ENCODE measurements at regions of chr3 and their contacts with region 1.

Region 1: GRCh38 chr3:170614214-170614966 is 28.5 kb upstream of the SLC7A14 start:
- DNase-seq: no peak
- H3K4me3 Mint-ChIP-seq: no peak overlapping the region
- H3K27ac Mint-ChIP-seq: no peak overlapping the region
- H3K4me1 Mint-ChIP-seq: peaks cover 2% of the 10 kb centered on the region
- H3K27me3 Mint-ChIP-seq: peaks cover 17% of the 10 kb centered on the region

Region 2: DNA sequence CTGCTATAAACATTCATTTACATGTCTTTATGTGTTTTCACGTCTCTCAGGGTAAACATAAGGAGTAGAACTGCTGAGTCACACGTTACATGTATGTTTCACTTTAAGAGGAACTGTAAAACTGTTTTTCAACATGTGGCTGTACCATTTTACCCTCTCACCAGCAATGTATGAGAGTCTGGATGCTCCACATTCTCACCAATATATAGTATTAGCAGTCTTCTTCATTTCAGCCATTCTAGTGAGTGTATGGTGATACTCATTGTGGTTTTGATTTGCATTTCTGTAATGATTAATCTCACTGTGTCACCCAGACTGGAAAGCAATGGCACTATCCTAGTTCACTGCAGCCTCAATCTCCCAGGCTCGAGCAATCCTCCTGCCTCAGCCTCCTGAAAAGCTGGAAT is 469.9 kb before region 1 on chr3:
- intact Hi-C with region 1: no loop called
- DNase-seq: no peak
- H3K4me3 Mint-ChIP-seq: no peak overlapping the region
- H3K27ac Mint-ChIP-seq: no peak overlapping the region
- H3K4me1 Mint-ChIP-seq: peaks cover 9% of the 10 kb centered on the region
- H3K27me3 Mint-ChIP-seq: no peaks in the 10 kb centered on the region

Region 3: GRCh38 chr3:170440346-170440745 is 174.0 kb before region 1 on chr3:
- intact Hi-C with region 1: no loop called
- DNase-seq: no peak
- H3K4me3 Mint-ChIP-seq: no peak overlapping the region
- H3K27ac Mint-ChIP-seq: no peak overlapping the region
- H3K4me1 Mint-ChIP-seq: peaks cover 14% of the 10 kb centered on the region
- H3K27me3 Mint-ChIP-seq: peaks cover 4% of the 10 kb centered on the region

Region 4: DNA sequence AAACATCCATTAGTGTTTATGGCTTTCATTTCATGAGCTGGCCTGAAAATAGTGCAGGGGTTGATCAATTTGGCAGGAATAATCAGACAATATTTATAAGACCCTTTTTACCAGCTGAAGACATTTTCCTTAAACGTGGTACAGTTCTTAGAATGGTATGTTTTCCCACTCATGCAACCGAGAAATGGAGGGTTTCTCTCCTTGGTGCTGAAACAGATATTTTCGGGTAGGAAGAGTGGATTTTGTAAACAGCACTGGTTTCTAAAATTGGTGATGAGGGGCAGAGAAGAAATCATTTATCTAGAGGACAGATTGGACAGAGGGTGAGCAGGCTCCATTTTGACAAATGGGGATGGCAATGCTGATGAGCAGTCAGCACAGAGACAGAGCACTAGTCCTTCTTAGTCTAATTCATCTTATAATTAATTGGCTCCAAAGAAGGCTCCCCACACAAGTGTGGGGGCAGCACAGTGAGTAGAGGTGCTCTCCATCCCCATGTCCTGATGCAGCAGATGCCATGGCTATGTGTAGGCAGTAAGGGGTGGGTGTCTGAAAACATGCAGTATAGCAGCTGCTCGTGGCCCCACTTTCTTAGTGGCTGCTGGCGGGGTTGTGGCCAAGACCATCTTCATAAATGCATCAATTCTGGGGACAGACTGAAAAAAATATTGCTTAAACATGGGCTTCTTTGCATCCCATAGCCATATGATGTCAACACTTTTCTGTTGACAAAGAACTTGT is 10.4 kb before region 1 on chr3:
- intact Hi-C with region 1: loop called (anchors 1 kb)
- DNase-seq: no peak
- H3K4me3 Mint-ChIP-seq: no peak overlapping the region
- H3K27ac Mint-ChIP-seq: no peak overlapping the region
- H3K4me1 Mint-ChIP-seq: no peaks in the 10 kb centered on the region
- H3K27me3 Mint-ChIP-seq: peaks cover 22% of the 10 kb centered on the region

Region 5: GRCh38 chr3:170765419-170766078 is 151.2 kb after region 1 on chr3:
- intact Hi-C with region 1: no loop called
- DNase-seq: no peak
- H3K4me3 Mint-ChIP-seq: no peak overlapping the region
- H3K27ac Mint-ChIP-seq: no peak overlapping the region
- H3K4me1 Mint-ChIP-seq: no peaks in the 10 kb centered on the region
- H3K27me3 Mint-ChIP-seq: peaks cover 8% of the 10 kb centered on the region